ENCODE measurements at regions of chr1 and their contacts with region 1.

Region 1: GRCh38 chr1:153572569-153573015 is 6.9 kb upstream of the S100A2 start:
- DNase-seq: peak; percentile 92
- H3K4me3 ChIP-seq: no peak overlapping the region
- H3K27ac ChIP-seq: peak overlapping the region; percentile 23
- H3K4me1 ChIP-seq: peaks cover 7% of the 10 kb centered on the region
- H3K27me3 ChIP-seq: no peaks in the 10 kb centered on the region
- CTCF ChIP-seq: peak; percentile 79

Region 2: GRCh38 chr1:153352523-153352922 is 220.1 kb before region 1 on chr1:
- intact Hi-C with region 1: loop called (anchors 10 kb)
- DNase-seq: peak; percentile 72
- H3K4me3 ChIP-seq: no peak overlapping the region
- H3K27ac ChIP-seq: no peak overlapping the region
- H3K4me1 ChIP-seq: no peaks in the 10 kb centered on the region
- H3K27me3 ChIP-seq: no peaks in the 10 kb centered on the region
- CTCF ChIP-seq: peak; percentile 92

Region 3: DNA sequence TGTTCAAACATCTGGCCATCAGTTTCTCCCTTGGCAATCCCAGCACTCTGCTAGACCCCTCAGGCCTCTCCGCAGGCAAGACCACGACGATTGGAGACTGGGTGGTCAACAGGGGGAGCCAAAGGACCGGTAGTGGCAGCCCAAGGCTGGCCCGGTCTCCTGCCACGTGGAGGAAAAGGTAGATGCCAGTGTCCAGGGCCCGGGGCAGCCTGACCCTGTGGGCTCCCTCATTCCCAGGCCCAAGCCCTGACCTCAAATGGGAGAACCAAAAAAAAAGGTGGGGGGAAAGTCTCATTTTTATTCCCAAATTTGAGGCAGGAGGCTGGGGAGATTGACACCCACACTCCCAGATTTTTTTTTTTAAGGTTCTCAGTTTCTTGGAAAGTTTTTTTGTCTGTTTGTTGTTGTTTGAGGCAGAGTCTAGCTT is 61.6 kb before region 1 on chr1:
- intact Hi-C with region 1: loop called (anchors 2 kb)
- DNase-seq: peak; percentile 91
- H3K4me3 ChIP-seq: no peak overlapping the region
- H3K27ac ChIP-seq: no peak overlapping the region
- H3K4me1 ChIP-seq: peaks cover 4% of the 10 kb centered on the region
- H3K27me3 ChIP-seq: no peaks in the 10 kb centered on the region
- CTCF ChIP-seq: peak; percentile 75

Region 4: DNA sequence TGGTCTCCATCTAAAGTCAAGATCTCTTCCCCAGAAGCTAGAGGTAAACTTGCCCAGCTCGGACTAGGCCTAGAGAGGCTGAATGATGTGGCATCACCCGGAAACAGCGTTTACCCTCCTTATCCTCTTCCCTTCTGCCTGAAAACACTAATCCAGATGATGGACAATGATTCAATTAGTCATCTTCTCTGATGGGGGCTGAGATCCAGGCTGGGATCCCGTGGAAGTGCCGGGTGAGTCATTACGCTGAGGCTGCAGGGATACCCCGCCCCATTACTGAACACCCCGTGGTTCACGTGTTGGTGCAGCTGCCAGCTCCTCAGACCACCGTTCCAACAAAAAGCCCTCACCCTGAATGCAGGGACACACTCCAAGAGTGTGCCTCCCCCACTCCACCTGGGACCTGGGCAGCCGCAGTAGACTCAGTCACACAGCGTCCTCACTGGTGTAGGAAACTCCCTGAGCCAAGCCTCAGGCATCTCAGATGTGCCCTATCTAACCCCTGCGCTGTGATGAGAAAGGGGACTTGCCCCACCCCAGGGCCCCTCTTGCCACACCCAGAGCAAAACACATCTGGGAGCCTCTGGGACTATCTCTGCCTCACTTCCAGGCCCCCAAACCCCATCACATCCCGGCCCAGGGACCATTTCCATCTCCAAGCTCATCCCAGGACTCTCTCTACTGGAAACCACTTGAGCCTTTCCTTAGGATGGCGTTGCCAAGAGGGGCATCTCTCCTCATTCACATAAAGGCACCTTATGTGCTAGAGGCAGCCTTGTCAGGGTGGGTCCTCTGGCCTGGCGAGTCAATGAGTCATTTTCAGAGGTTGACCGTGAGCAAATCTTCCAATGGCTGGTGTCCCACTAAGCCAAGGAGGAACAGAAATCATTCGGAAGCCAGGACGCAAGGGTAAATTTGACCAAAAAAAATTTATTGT is 38.6 kb before region 1 on chr1:
- intact Hi-C with region 1: loop called (anchors 1 kb)
- DNase-seq: peak; percentile 68
- H3K4me3 ChIP-seq: peak overlapping the region; percentile 76
- H3K27ac ChIP-seq: peak overlapping the region; percentile 99
- H3K4me1 ChIP-seq: peaks cover 15% of the 10 kb centered on the region
- H3K27me3 ChIP-seq: no peaks in the 10 kb centered on the region
- CTCF ChIP-seq: no peak

Region 5: GRCh38 chr1:153623101-153623500 is 50.5 kb after region 1 on chr1:
- intact Hi-C with region 1: loop called (anchors 5 kb)
- DNase-seq: no peak
- H3K4me3 ChIP-seq: no peak overlapping the region
- H3K27ac ChIP-seq: no peak overlapping the region
- H3K4me1 ChIP-seq: peaks cover 4% of the 10 kb centered on the region
- H3K27me3 ChIP-seq: no peaks in the 10 kb centered on the region
- CTCF ChIP-seq: no peak

Region 6: DNA sequence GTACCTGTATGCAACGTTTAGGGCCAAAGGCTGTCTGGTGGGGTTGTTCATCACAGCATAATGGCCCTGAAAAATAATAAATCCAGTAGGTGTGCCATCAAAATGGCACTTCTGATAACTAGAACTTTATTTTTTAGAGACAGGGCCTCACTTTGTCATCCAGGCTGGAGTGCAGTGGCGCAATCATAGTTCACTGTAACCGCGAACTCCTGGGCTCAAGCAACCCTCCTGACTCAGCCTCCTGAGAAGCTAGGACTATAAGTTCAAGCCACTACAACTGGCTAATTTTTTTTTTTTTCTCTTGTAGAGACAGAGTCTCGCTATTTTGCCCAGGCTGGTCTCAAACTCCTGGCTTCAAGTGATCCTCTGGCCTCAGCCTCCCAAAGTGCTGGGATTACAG is 90.6 kb after region 1 on chr1:
- intact Hi-C with region 1: loop called (anchors 10 kb)
- DNase-seq: no peak
- H3K4me3 ChIP-seq: no peak overlapping the region
- H3K27ac ChIP-seq: no peak overlapping the region
- H3K4me1 ChIP-seq: peaks cover 5% of the 10 kb centered on the region
- H3K27me3 ChIP-seq: no peaks in the 10 kb centered on the region
- CTCF ChIP-seq: no peak

Region 7: GRCh38 chr1:153749408-153750005 is 176.9 kb after region 1 on chr1:
- intact Hi-C with region 1: loop called (anchors 10 kb)
- DNase-seq: peak; percentile 84
- H3K4me3 ChIP-seq: no peak overlapping the region
- H3K27ac ChIP-seq: no peak overlapping the region
- H3K4me1 ChIP-seq: peaks cover 17% of the 10 kb centered on the region
- H3K27me3 ChIP-seq: no peaks in the 10 kb centered on the region
- CTCF ChIP-seq: peak; percentile 95